ENCODE measurements at regions of chr1 and their contacts with region 1.

Region 1: DNA sequence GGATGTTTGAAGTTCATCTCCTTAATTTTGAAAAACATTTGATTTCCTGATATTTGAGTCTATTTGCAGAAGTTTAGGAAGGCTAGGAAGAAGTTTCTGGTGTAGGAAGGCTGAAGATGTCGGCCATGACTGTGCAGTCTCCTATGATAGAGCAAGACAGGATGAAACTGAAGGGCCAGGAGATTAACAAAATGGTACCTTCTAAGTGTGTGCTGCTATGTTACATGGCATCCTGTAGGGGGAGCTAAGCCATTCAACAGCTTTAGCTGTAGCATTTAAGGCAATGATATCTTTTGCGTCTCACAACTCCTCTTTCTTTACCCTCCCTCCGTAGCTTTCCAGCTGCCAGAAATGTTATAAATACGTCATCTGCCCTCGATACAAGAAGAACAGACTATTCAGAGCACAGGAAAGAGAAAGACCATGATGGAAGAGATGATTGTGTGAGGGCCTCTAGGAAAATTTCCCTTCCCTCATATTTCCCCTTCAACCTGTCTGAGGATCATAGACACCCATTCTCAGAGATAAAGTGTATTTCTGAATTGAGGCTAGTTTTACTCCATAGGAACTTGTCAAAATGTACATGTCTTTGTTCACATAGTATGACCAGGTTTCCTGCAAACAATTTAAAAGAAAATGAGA is 61.1 kb downstream of the XCL1 start:
- DNase-seq: no peak
- H3K4me3 Mint-ChIP-seq: no peak overlapping the region
- H3K27ac Mint-ChIP-seq: no peak overlapping the region
- H3K4me1 Mint-ChIP-seq: no peaks in the 10 kb centered on the region
- H3K27me3 Mint-ChIP-seq: peaks cover 21% of the 10 kb centered on the region

Region 2: GRCh38 chr1:168653567-168653966 is 16.1 kb after region 1 on chr1:
- CTCF ChIA-PET with region 1: interaction called, 11 read pairs
- POLR2A ChIA-PET with region 1: no interaction called
- DNase-seq: no peak
- H3K4me3 Mint-ChIP-seq: no peak overlapping the region
- H3K27ac Mint-ChIP-seq: no peak overlapping the region
- H3K4me1 Mint-ChIP-seq: no peaks in the 10 kb centered on the region
- H3K27me3 Mint-ChIP-seq: peaks cover 14% of the 10 kb centered on the region

Measured in activated CD4-positive, alpha-beta memory T cell treated with anti-CD3 and anti-CD28 coated beads, Interleukin-2, amount 10 ng/mL, durations not matched to agents 7 days and 5 days (primary cell).